Activated CD4-positive, alpha-beta memory T cell treated with anti-CD3 and anti-CD28 coated beads for 36 hours (primary cell): ENCODE measurements at regions of chr9 and their contacts with region 1.

Region 1: DNA sequence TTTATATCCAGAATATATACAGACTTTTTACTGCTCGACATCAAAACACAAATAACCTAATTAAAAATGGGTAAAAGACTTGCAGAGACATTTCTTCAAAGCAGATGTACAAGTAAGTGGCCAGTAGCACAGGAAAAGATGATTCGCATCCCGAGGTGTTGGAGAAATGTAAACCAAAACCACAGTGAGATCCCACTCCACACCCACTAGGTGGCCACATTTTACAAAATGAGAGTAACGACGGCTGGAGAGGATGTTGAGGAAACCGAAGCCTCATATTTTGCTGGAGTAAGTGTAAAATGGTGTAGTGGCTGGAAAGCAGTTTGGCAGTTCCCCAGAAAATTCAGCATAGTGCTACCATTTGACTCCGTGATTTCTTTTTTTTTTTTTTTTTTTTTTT is 21.2 kb upstream of the GBGT1 start:
- DNase-seq: peak; percentile 71
- H3K4me3 Mint-ChIP-seq: no peak overlapping the region
- H3K27ac Mint-ChIP-seq: no peak overlapping the region
- H3K4me1 Mint-ChIP-seq: peaks cover 20% of the 10 kb centered on the region
- H3K27me3 Mint-ChIP-seq: peaks cover 21% of the 10 kb centered on the region

Region 2: GRCh38 chr9:133160742-133161546 is 24.0 kb before region 1 on chr9:
- CTCF ChIA-PET with region 1: interaction called, 12 read pairs
- POLR2A ChIA-PET with region 1: no interaction called
- intact Hi-C with region 1: no loop called
- DNase-seq: peak; percentile 56
- H3K4me3 Mint-ChIP-seq: no peak overlapping the region
- H3K27ac Mint-ChIP-seq: no peak overlapping the region
- H3K4me1 Mint-ChIP-seq: peaks cover 2% of the 10 kb centered on the region
- H3K27me3 Mint-ChIP-seq: no peaks in the 10 kb centered on the region

Region 3: DNA sequence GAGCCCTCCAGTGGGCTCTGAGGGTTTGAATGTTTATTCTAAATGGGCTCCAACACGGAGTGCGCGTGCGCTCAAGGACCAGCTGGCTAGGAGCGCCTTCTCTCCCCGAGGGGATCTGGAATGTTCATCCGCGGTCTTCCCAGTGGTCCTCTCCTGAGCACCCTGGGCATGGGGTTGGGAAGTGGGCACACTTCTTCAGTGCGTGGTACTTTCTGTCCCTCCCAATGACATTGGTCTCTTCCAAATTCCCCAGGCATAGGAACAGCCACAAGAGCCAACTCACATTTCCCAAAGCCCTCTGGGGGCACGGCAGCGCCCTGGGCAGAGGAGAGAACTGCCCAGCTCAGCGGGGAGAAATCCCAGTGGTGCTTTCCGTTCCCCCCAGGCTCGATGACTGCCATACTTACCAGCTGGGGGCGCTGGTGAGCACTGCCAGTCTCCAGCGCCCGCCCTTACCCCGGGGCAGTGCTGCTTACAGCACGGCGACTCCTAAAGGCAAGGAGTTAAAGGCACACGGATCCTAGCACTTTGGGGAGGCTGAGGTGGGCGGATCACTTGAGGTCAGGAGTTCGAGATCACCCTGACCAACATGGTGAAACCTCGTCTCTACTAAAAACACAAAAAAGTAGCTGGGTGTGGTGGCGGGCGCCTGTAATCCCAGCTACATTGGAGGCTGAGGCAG is 54.0 kb after region 1 on chr9:
- CTCF ChIA-PET with region 1: interaction called, 15 read pairs
- POLR2A ChIA-PET with region 1: no interaction called
- intact Hi-C with region 1: loop called (anchors 2 kb)
- DNase-seq: peak; percentile 80
- H3K4me3 Mint-ChIP-seq: peak overlapping the region; percentile 21
- H3K27ac Mint-ChIP-seq: no peak overlapping the region
- H3K4me1 Mint-ChIP-seq: peaks cover 3% of the 10 kb centered on the region
- H3K27me3 Mint-ChIP-seq: peaks cover 9% of the 10 kb centered on the region

Region 4: GRCh38 chr9:133347985-133348717 is 163.2 kb after region 1 on chr9 and contains the starts of genes MED22 and RPL7A:
- CTCF ChIA-PET with region 1: interaction called, 3 read pairs
- POLR2A ChIA-PET with region 1: no interaction called
- intact Hi-C with region 1: loop called (anchors 5 kb)
- DNase-seq: peak; percentile 96
- H3K4me3 Mint-ChIP-seq: peak within 1 kb of the TSS; percentile 97
- H3K27ac Mint-ChIP-seq: peak within 1 kb of the TSS; percentile 98
- H3K4me1 Mint-ChIP-seq: peaks cover 38% of the 10 kb centered on the region
- H3K27me3 Mint-ChIP-seq: no peaks in the 10 kb centered on the region
- total RNA-seq, gene MED22: 20.8 to 20.9 TPM
- total RNA-seq, gene RPL7A: 3,340 to 3,454 TPM

Region 5: GRCh38 chr9:133485361-133486260 is 300.6 kb after region 1 on chr9:
- CTCF ChIA-PET with region 1: interaction called, 40 read pairs
- POLR2A ChIA-PET with region 1: no interaction called
- intact Hi-C with region 1: loop called (anchors 2 kb)
- DNase-seq: no peak
- H3K4me3 Mint-ChIP-seq: no peak overlapping the region
- H3K27ac Mint-ChIP-seq: no peak overlapping the region
- H3K4me1 Mint-ChIP-seq: no peaks in the 10 kb centered on the region
- H3K27me3 Mint-ChIP-seq: peaks cover 14% of the 10 kb centered on the region